ENCODE measurements at regions of chr10 and their contacts with region 1.

Region 1: GRCh38 chr10:1733720-1734119 is 3.6 kb downstream of the ADARB2 start:
- DNase-seq: no peak
- H3K4me3 ChIP-seq: no peak overlapping the region
- H3K4me3 Mint-ChIP-seq: no peak overlapping the region
- H3K27ac Mint-ChIP-seq: no peak overlapping the region
- H3K4me1 ChIP-seq: no peaks in the 10 kb centered on the region
- H3K4me1 Mint-ChIP-seq: no peaks in the 10 kb centered on the region
- H3K27me3 ChIP-seq: peaks cover 1% of the 10 kb centered on the region; the same call in 1 of the 2 replicates
- H3K27me3 Mint-ChIP-seq: peaks cover 36% of the 10 kb centered on the region
- CTCF ChIP-seq: no peak

Region 2: GRCh38 chr10:1882180-1882579 is 148.5 kb after region 1 on chr10:
- CTCF ChIA-PET with region 1: no interaction called
- POLR2A ChIA-PET with region 1: no interaction called
- intact Hi-C with region 1: no loop called
- DNase-seq: no peak
- H3K4me3 ChIP-seq: no peak overlapping the region
- H3K4me3 Mint-ChIP-seq: no peak overlapping the region
- H3K27ac Mint-ChIP-seq: no peak overlapping the region
- H3K4me1 ChIP-seq: no peaks in the 10 kb centered on the region
- H3K4me1 Mint-ChIP-seq: no peaks in the 10 kb centered on the region
- H3K27me3 ChIP-seq: no peaks in the 10 kb centered on the region
- H3K27me3 Mint-ChIP-seq: peaks cover 26% of the 10 kb centered on the region
- CTCF ChIP-seq: no peak

Region 3: GRCh38 chr10:2202401-2202800 is 468.7 kb after region 1 on chr10:
- CTCF ChIA-PET with region 1: no interaction called
- POLR2A ChIA-PET with region 1: interaction called, 17 read pairs
- intact Hi-C with region 1: no loop called
- DNase-seq: no peak
- H3K4me3 ChIP-seq: no peak overlapping the region
- H3K4me3 Mint-ChIP-seq: no peak overlapping the region
- H3K27ac Mint-ChIP-seq: no peak overlapping the region
- H3K4me1 ChIP-seq: no peaks in the 10 kb centered on the region
- H3K4me1 Mint-ChIP-seq: no peaks in the 10 kb centered on the region
- H3K27me3 ChIP-seq: no peaks in the 10 kb centered on the region
- H3K27me3 Mint-ChIP-seq: peaks cover 4% of the 10 kb centered on the region
- CTCF ChIP-seq: no peak

Region 4: GRCh38 chr10:2380215-2380614 is 646.5 kb after region 1 on chr10:
- CTCF ChIA-PET with region 1: no interaction called
- POLR2A ChIA-PET with region 1: interaction called, 10 read pairs
- intact Hi-C with region 1: no loop called
- DNase-seq: no peak
- H3K4me3 ChIP-seq: no peak overlapping the region
- H3K4me3 Mint-ChIP-seq: no peak overlapping the region
- H3K27ac Mint-ChIP-seq: no peak overlapping the region
- H3K4me1 ChIP-seq: no peaks in the 10 kb centered on the region
- H3K4me1 Mint-ChIP-seq: no peaks in the 10 kb centered on the region
- H3K27me3 ChIP-seq: no peaks in the 10 kb centered on the region
- H3K27me3 Mint-ChIP-seq: peaks cover 24% of the 10 kb centered on the region
- CTCF ChIP-seq: no peak